ENCODE measurements at regions of chrX and their contacts with region 1.

Region 1: GRCh38 chrX:13283950-13284914 is 35.6 kb downstream of the ATXN3L start:
- DNase-seq: no peak

Region 2: DNA sequence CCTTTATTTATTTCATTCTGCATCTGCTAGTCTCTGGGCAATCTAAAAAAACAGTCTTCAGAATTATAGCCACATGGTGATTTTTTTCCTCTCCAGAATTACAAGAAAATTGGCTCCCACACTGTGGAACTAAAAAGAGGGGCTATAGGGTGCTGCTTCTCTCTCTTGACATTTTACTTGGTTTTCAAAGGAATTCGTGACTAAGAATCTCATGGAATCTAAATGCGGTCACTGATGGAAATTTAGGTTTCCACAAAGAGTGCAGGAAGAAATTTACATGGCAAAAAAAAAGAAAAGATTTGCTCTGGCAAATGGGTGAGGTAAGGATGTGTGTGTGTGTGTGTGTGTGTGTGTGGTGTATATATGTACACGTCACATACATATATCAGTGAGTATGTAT is 25.4 kb after region 1 on chrX:
- intact Hi-C with region 1: loop called in 1 of 2 experiments (anchors 1 kb)
- DNase-seq: no peak